ENCODE measurements at regions of chr10 and their contacts with region 1.

Region 1: DNA sequence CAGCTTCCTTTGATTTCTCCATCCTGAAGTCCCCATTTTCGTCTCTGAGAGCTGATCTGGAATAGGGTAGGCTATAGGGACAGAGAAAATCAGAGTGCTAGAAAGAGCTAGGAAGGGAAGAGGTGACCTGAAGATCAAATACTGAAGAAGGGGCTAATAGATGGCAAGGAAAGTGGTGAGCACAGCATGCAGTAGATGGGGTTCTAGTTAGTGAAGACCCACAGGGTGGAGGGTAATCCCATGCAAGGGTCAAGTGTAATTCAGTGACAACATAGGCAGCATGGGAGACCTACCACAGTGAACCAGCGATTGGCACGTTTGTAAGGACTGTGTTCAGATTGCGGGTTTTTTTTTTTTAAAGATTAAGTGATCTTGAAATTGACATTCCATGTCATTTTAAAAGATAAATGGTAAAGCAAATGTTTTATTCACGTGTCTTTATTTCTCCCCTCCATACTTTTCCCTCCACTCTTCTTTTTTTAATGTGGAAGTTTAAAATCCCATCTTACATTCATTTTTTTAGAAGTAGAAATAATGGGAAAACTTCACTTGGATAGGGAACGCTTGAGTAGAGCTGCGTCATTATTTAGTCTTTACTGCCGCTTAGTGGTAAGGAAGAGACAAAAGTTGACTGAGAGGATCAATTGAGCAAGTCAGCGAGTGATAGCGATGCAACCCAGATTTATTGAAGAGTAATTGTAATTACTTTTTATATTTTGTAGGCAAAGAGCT is 21.0 kb upstream of the ABI1 start:
- DNase-seq: no peak
- H3K4me3 ChIP-seq: no peak overlapping the region
- CTCF ChIP-seq: no peak
- POLR2A ChIP-seq: no peak

Region 2: GRCh38 chr10:26725837-26726727 is 155.7 kb before region 1 on chr10:
- intact Hi-C with region 1: loop called (anchors 5 kb)
- DNase-seq: peak in 1 of 2 donors; percentile 88
- H3K4me3 ChIP-seq: no peak overlapping the region
- CTCF ChIP-seq: peak in 1 of 3 donors; percentile 51
- POLR2A ChIP-seq: no peak

Region 3: GRCh38 chr10:26840938-26841732 is 40.6 kb before region 1 on chr10:
- intact Hi-C with region 1: no loop called
- DNase-seq: no peak
- H3K4me3 ChIP-seq: no peak overlapping the region
- CTCF ChIP-seq: no peak
- POLR2A ChIP-seq: no peak

Region 4: GRCh38 chr10:26960308-26960707 is 78.5 kb after region 1 on chr10:
- intact Hi-C with region 1: no loop called
- DNase-seq: no peak
- H3K4me3 ChIP-seq: no peak overlapping the region
- CTCF ChIP-seq: no peak
- POLR2A ChIP-seq: no peak